Activated CD8-positive, alpha-beta T cell treated with anti-CD3 and anti-CD28 coated beads for 36 hours (primary cell): ENCODE measurements at regions of chr1 and their contacts with region 1.

Region 1: DNA sequence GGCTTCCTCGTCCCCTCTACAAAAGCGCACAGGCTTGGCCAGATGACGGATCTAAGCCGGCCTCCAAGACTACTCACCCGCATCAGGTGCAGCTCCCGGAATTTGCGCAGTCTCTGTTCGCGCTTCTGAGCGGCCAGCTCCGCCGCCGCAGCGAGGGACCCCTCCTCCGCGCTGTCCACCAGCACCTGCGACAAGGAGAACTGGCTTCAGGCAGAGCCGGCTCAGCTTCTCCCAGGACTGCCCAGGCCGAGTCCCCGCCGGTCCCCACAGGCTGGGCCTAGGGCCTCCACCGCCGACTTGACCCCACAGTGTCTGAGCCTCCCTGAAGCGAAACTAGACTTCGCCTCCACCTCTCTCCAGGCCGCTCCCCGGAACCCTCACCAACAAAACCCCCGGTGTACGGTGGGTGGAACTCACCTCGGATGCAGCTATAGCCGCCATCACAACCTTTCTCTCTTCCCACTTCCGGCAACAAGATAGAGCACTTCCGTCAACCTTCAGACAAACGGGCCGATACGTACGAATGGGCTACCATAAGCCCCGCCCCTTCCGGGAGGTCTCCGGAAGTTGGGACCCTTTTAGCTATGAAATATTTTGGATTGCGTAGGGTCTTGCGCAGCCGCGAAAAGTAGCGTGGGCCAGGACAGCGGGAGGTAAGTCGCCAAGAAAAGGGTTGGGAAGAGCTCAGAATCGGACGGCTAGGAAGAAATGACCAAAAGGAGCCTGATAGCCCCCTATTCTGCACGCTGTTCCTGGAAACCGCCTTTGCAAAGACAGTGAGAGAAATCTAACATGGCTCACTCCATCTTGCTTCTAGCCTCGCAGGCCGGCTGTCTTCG is at the start of gene SYF2:
- DNase-seq: peak; percentile 97
- ATAC-seq: peak; percentile 93
- H3K4me3 Mint-ChIP-seq: no peak within 1 kb of the TSS
- H3K27ac Mint-ChIP-seq: no peak within 1 kb of the TSS
- H3K4me1 Mint-ChIP-seq: peaks cover 50% of the 10 kb centered on the region
- H3K27me3 Mint-ChIP-seq: no peaks in the 10 kb centered on the region
- CTCF ChIP-seq: no peak
- total RNA-seq, gene SYF2: 35.7 to 39.6 TPM

Region 2: GRCh38 chr1:25182629-25183028 is 49.6 kb before region 1 on chr1:
- CTCF ChIA-PET with region 1: no interaction called
- POLR2A ChIA-PET with region 1: no interaction called
- intact Hi-C with region 1: no loop called
- DNase-seq: no peak
- ATAC-seq: no peak
- H3K4me3 Mint-ChIP-seq: no peak overlapping the region
- H3K27ac Mint-ChIP-seq: no peak overlapping the region
- H3K4me1 Mint-ChIP-seq: no peaks in the 10 kb centered on the region
- H3K27me3 Mint-ChIP-seq: peaks cover 3% of the 10 kb centered on the region
- CTCF ChIP-seq: no peak

Region 3: DNA sequence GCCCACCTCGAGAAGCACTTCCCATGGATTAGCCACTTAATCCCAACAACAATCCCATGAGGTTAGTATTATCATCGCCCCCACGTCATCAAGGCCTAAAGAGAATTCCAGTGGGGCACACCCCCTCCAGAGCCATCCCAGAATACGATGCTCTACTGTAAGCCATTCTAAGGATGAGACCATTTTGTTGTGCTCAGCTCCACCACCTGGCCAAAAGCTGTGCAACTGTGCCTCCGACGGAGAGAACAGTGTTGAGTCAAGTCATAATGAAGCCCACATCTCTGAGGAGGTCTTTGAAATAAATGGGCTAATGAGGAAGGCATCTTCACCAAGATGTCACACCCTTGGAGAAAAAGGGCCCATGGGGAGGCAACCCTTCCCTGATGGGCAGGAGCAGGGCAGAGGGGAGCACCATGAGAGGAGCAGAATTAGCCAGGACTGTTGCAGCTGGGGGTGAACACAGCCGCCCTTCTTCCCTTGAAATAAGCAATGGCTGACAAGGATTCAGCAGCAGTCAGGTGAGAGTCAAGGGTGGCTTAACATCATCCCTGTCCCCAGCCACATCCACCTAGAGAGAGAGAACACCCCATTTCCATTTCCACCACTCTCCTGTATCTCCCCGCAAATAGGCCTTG is 14.5 kb before region 1 on chr1:
- CTCF ChIA-PET with region 1: no interaction called
- POLR2A ChIA-PET with region 1: interaction called, 18 read pairs
- intact Hi-C with region 1: no loop called
- DNase-seq: no peak
- ATAC-seq: no peak
- H3K4me3 Mint-ChIP-seq: no peak overlapping the region
- H3K27ac Mint-ChIP-seq: no peak overlapping the region
- H3K4me1 Mint-ChIP-seq: no peaks in the 10 kb centered on the region
- H3K27me3 Mint-ChIP-seq: no peaks in the 10 kb centered on the region
- CTCF ChIP-seq: no peak

Region 4: GRCh38 chr1:25247024-25247828 is 15.0 kb after region 1 on chr1 and contains the start of gene RSRP1:
- CTCF ChIA-PET with region 1: interaction called, 3 read pairs
- POLR2A ChIA-PET with region 1: interaction called, 40 read pairs
- intact Hi-C with region 1: no loop called
- DNase-seq: peak; percentile 100
- ATAC-seq: peak; percentile 91
- H3K4me3 Mint-ChIP-seq: peak within 1 kb of the TSS; percentile 97
- H3K27ac Mint-ChIP-seq: peak within 1 kb of the TSS; percentile 98
- H3K4me1 Mint-ChIP-seq: peaks cover 43% of the 10 kb centered on the region
- H3K27me3 Mint-ChIP-seq: no peaks in the 10 kb centered on the region
- CTCF ChIP-seq: no peak
- total RNA-seq, gene RSRP1: 124 to 139 TPM